Activated naive CD4-positive, alpha-beta T cell treated with anti-CD3 and anti-CD28 coated beads for 36 hours (primary cell): ENCODE measurements at regions of chr3 and their contacts with region 1.

Region 1: DNA sequence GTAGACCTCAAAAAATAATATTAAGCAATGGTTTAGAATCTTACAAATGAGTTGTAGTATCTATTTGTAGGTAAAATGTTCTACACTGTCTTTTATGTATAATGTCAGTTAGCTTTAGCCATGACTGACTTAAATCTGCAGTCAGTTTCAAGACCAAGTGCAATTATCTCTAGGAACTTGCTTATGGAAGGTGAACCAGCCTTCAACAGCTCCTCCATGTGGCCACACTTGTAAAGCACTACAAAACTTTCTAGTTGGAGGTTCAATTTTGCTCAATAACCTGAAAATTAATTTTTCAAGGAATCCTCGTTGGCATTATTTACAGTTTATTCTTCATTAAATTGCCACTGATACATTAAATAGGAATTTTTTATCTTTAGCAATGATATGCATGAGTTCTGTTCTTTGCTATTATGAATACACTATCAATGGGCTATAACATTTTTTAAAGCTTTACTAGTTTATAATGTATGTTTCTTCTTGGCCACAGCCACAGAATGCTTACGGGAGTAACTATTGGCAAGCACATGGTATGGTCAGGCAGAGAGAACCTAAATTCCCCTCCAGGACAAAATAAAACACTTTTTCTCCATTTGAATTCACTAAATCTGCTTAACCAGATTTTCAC is 315.3 kb upstream of the UBE2E2 start:
- DNase-seq: peak; percentile 13
- H3K4me3 Mint-ChIP-seq: no peak overlapping the region
- H3K27ac Mint-ChIP-seq: no peak overlapping the region
- H3K4me1 Mint-ChIP-seq: no peaks in the 10 kb centered on the region
- H3K27me3 Mint-ChIP-seq: peaks cover 5% of the 10 kb centered on the region

Region 2: GRCh38 chr3:22089284-22089683 is 798.5 kb before region 1 on chr3:
- CTCF ChIA-PET with region 1: no interaction called
- intact Hi-C with region 1: loop called (anchors 5 kb)
- DNase-seq: peak; percentile 5
- H3K4me3 Mint-ChIP-seq: no peak overlapping the region
- H3K27ac Mint-ChIP-seq: no peak overlapping the region
- H3K4me1 Mint-ChIP-seq: no peaks in the 10 kb centered on the region
- H3K27me3 Mint-ChIP-seq: no peaks in the 10 kb centered on the region

Region 3: DNA sequence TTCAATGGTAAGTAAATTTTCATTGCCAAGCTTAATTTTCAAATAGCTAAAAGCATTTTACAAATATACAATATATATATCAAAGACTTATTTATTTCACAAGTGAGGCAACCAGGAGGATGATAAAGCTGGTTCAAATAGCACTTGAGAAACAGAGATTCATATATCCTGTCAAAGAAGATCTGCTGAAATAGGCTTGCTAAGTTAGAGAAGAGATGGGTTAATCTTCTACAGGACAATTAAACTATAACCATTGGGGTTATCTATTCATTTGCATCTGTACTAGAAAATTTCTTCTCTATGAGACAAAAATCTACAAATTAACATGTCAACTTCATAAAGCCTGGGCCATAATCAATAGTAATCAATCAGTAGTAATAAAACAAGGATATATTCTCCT is 322.4 kb before region 1 on chr3:
- CTCF ChIA-PET with region 1: no interaction called
- intact Hi-C with region 1: loop called (anchors 1 kb)
- DNase-seq: no peak
- H3K4me3 Mint-ChIP-seq: no peak overlapping the region
- H3K27ac Mint-ChIP-seq: no peak overlapping the region
- H3K4me1 Mint-ChIP-seq: no peaks in the 10 kb centered on the region
- H3K27me3 Mint-ChIP-seq: no peaks in the 10 kb centered on the region

Region 4: DNA sequence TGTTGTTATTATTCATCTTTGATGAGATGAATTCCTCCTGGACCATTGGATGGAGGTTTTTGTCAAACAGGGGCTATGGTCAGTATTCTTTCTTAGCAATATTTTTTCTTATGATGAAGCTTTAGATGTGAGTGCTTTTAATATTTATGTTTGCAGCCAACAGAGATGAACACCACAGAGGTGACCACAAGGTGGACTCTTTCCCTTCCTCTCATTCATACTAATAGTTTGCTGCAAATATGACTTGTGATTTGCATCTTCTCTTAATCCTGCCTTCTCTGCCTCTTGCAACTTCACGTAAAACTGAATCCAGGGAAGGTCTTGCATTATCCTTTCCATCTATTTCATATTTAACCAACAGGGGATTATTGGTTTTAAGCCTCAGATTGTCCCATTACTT is 157.8 kb before region 1 on chr3:
- CTCF ChIA-PET with region 1: no interaction called
- intact Hi-C with region 1: loop called (anchors 10 kb)
- DNase-seq: no peak
- H3K4me3 Mint-ChIP-seq: no peak overlapping the region
- H3K27ac Mint-ChIP-seq: no peak overlapping the region
- H3K4me1 Mint-ChIP-seq: no peaks in the 10 kb centered on the region
- H3K27me3 Mint-ChIP-seq: no peaks in the 10 kb centered on the region

Region 5: GRCh38 chr3:22977650-22978289 is 90.0 kb after region 1 on chr3:
- CTCF ChIA-PET with region 1: no interaction called
- intact Hi-C with region 1: no loop called
- DNase-seq: no peak
- H3K4me3 Mint-ChIP-seq: no peak overlapping the region
- H3K27ac Mint-ChIP-seq: no peak overlapping the region
- H3K4me1 Mint-ChIP-seq: peaks cover 3% of the 10 kb centered on the region
- H3K27me3 Mint-ChIP-seq: no peaks in the 10 kb centered on the region